ENCODE measurements at regions of chr1 and their contacts with region 1.

Region 1: GRCh38 chr1:43414634-43415223 is 25.0 kb downstream of the SZT2 start:
- DNase-seq: peak; percentile 22
- H3K4me3 Mint-ChIP-seq: no peak overlapping the region
- H3K27ac Mint-ChIP-seq: peak overlapping the region; percentile 10
- H3K4me1 Mint-ChIP-seq: no peaks in the 10 kb centered on the region
- H3K27me3 Mint-ChIP-seq: no peaks in the 10 kb centered on the region

Region 2: GRCh38 chr1:43238085-43238484 is 176.6 kb before region 1 on chr1:
- intact Hi-C with region 1: loop called (anchors 1 kb)
- DNase-seq: peak; percentile 13
- H3K4me3 Mint-ChIP-seq: no peak overlapping the region
- H3K27ac Mint-ChIP-seq: peak overlapping the region; percentile 30
- H3K4me1 Mint-ChIP-seq: peaks cover 17% of the 10 kb centered on the region
- H3K27me3 Mint-ChIP-seq: peaks cover 2% of the 10 kb centered on the region